ENCODE measurements at regions of chr4 and their contacts with region 1.

Region 1: GRCh38 chr4:48212165-48212564 is 57.5 kb downstream of the TEC start:
- DNase-seq: no peak
- ATAC-seq: peak; percentile 73
- H3K4me3 Mint-ChIP-seq: peak overlapping the region; percentile 68
- H3K27ac Mint-ChIP-seq: peak overlapping the region; percentile 83
- H3K4me1 Mint-ChIP-seq: peaks cover 38% of the 10 kb centered on the region
- H3K27me3 Mint-ChIP-seq: no peaks in the 10 kb centered on the region
- CTCF ChIP-seq: no peak

Region 2: GRCh38 chr4:48195374-48195773 is 16.8 kb before region 1 on chr4:
- CTCF ChIA-PET with region 1: interaction called, 6 read pairs
- POLR2A ChIA-PET with region 1: interaction called, 10 read pairs
- intact Hi-C with region 1: loop called (anchors 1 kb)
- DNase-seq: no peak
- ATAC-seq: peak; percentile 18
- H3K4me3 Mint-ChIP-seq: peak overlapping the region; percentile 64
- H3K27ac Mint-ChIP-seq: peak overlapping the region; percentile 73
- H3K4me1 Mint-ChIP-seq: peaks cover 70% of the 10 kb centered on the region
- H3K27me3 Mint-ChIP-seq: no peaks in the 10 kb centered on the region
- CTCF ChIP-seq: no peak

Region 3: DNA sequence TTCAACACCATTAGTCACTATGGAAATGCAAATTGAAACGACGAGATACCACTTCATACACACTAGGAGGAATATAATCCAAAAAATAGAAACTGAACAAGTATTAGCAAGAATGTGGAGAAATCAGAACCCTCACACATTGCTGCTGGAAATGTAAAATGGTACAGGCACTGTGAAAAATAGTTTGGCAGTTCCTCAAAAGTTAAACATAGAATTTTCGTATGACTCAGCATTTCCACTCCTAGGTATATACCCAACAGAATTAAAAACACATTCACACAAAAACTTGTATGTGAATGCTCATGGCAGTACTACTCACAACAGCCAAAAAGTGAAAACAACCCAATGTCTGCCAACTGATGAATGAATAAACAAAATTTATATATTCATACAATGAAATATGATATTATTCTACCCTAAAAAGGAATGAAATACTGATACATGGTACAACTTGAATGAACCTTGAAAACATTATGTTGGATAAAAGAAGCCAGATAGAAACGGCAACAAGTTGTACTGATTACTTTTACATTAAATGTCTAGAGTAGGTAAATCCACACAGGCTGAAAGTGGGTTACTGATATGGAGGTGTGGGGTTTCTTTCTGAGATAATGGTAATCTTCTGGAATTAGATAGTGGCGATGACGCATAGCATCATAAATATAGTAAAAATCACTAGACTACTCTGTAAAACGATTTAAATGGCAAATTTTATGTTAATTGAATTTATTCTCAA is 35.1 kb after region 1 on chr4:
- CTCF ChIA-PET with region 1: no interaction called
- POLR2A ChIA-PET with region 1: interaction called, 3 read pairs
- intact Hi-C with region 1: loop called (anchors 1 kb)
- DNase-seq: no peak
- ATAC-seq: peak; percentile 62
- H3K4me3 Mint-ChIP-seq: no peak overlapping the region
- H3K27ac Mint-ChIP-seq: peak overlapping the region; percentile 7
- H3K4me1 Mint-ChIP-seq: peaks cover 30% of the 10 kb centered on the region
- H3K27me3 Mint-ChIP-seq: no peaks in the 10 kb centered on the region
- CTCF ChIP-seq: no peak

Region 4: GRCh38 chr4:48275247-48275646 is 63.1 kb after region 1 on chr4:
- CTCF ChIA-PET with region 1: interaction called, 11 read pairs
- POLR2A ChIA-PET with region 1: interaction called, 3 read pairs
- intact Hi-C with region 1: no loop called
- DNase-seq: no peak
- ATAC-seq: peak; percentile 45
- H3K4me3 Mint-ChIP-seq: no peak overlapping the region
- H3K27ac Mint-ChIP-seq: no peak overlapping the region
- H3K4me1 Mint-ChIP-seq: peaks cover 15% of the 10 kb centered on the region
- H3K27me3 Mint-ChIP-seq: no peaks in the 10 kb centered on the region
- CTCF ChIP-seq: no peak